Endothelial cell of umbilical vein (primary cell): ENCODE measurements at regions of chr6 and their contacts with region 1.

Region 1: DNA sequence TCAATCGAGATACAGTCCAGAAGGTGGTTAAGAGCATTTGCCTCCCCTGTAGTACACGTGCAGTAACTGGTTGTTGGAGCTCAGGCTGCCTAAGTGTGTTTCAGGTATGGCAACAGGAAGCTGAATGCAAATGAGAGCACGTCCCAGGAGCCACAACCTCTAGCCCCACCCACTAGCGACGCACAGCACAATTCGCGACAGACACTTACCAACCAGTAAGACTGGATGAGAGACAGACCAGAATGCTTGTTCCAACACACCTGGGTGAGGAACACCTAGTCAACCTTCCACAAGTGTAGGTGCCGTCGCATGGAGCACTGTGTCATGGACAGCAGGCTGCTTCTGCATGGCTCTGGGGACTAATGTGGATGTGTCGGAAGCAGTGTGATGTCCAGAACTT is 7.2 kb upstream of the SERPINB1 start:
- DNase-seq: no peak
- H3K4me3 ChIP-seq: no peak overlapping the region
- H3K27ac ChIP-seq: no peak overlapping the region
- H3K4me1 ChIP-seq: peaks cover 31% of the 10 kb centered on the region
- H3K27me3 ChIP-seq: no peaks in the 10 kb centered on the region
- CTCF ChIP-seq: no peak
- POLR2A ChIP-seq: no peak

Region 2: DNA sequence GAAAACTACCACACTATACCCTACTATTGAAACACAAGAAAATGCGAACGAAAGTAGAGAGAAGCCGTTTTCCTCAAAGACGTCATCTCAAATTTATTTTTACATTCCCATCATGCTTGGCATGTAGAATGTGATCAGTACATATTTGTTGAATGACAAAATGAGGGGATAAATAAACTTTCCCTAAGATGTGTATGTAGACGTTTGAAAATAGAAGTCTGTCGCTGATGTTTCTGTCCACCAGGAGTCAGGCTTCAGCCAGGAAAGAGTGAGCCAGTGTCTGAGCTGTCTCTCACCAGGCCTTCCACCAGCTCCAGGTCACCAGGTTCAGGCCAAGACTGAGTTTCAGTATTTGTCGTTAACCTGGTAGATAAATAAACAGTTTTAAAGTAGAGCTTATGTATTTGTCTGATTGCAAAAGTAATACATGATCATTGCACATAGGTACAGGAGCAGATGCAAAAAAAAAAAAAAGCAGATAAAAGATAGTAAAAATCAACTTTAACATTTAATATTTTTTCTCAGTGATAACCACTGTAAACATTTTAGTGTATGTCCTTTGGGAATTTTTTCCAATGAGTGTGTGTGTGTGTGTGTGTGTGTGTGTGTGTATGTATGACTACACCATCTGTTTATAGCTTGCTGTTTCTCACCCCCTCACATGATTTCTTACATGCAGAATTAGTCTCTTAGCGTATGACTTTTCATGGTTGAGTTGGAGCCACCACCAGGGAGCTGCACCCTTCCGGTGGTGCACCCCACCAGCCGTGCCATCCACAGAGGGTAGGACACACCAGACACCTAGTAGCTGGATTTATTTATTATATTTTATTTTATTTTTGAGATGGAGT is 57.5 kb before region 1 on chr6:
- CTCF ChIA-PET with region 1: interaction called, 262 read pairs
- POLR2A ChIA-PET with region 1: interaction called, 3 read pairs
- dilution Hi-C with region 1: no loop called
- intact Hi-C with region 1: loop called (anchors 1 kb)
- DNase-seq: peak; percentile 92
- H3K4me3 ChIP-seq: no peak overlapping the region
- H3K27ac ChIP-seq: peak overlapping the region; percentile 25
- H3K4me1 ChIP-seq: peaks cover 5% of the 10 kb centered on the region
- H3K27me3 ChIP-seq: no peaks in the 10 kb centered on the region
- CTCF ChIP-seq: peak; percentile 71 to 79
- POLR2A ChIP-seq: no peak

Region 3: DNA sequence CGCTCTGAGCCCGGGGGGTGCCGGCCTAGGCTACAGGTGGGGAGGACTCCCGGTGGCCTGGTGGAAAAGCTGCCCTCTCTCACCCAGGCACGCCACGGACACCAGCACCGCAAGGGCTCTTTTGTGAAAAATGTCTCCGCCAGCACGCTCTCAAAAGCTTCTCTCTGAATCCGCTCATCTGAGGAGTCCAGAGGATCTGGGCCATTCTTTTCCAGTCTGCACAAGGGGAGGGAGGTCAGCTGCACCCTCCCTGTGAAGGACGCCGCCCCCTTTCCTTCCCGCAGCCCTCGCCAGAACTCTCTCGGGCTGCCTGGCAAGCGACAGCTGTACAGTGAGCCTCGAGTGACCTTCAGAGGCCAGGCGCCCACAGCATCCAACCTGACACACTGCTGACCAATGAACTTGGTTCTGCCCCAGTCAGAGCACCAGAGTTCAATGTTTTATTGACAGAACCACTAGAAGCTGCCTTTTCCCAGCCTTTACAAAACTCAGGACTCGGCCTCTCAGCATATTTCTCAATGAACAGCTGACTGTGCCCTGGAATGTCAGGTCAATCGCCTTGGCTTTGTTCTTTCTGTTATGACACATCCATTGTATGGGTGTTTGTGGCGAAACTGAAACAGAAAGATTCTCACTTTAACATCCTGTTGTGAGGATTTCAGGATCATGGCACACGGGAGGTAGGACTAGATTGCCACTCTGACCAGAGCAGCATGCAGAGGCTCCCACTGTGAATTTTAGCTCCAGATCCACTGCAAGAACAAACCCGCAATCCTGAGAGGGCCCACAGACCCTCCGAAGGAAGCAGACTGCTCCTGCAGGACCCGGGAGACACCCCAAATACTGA is 27.6 kb after region 1 on chr6:
- CTCF ChIA-PET with region 1: interaction called, 16 read pairs
- POLR2A ChIA-PET with region 1: interaction called, 5 read pairs
- dilution Hi-C with region 1: no loop called
- intact Hi-C with region 1: loop called (anchors 1 kb)
- DNase-seq: peak; percentile 98
- H3K4me3 ChIP-seq: peak overlapping the region in 2 of 3 experiments; percentile 28 to 53
- H3K27ac ChIP-seq: peak overlapping the region; percentile 91
- H3K4me1 ChIP-seq: peaks cover 29% of the 10 kb centered on the region
- H3K27me3 ChIP-seq: no peaks in the 10 kb centered on the region
- CTCF ChIP-seq: no peak
- POLR2A ChIP-seq: peak; percentile 55

Region 4: GRCh38 chr6:2911171-2911570 is 62.3 kb after region 1 on chr6:
- CTCF ChIA-PET with region 1: interaction called, 19 read pairs
- POLR2A ChIA-PET with region 1: no interaction called
- dilution Hi-C with region 1: no loop called
- intact Hi-C with region 1: loop called (anchors 1 kb)
- DNase-seq: no peak
- H3K4me3 ChIP-seq: no peak overlapping the region
- H3K27ac ChIP-seq: no peak overlapping the region
- H3K4me1 ChIP-seq: no peaks in the 10 kb centered on the region
- H3K27me3 ChIP-seq: no peaks in the 10 kb centered on the region
- CTCF ChIP-seq: no peak
- POLR2A ChIP-seq: no peak

Region 5: GRCh38 chr6:2940010-2940850 is 91.4 kb after region 1 on chr6:
- CTCF ChIA-PET with region 1: interaction called, 13 read pairs
- POLR2A ChIA-PET with region 1: no interaction called
- dilution Hi-C with region 1: no loop called
- intact Hi-C with region 1: no loop called
- DNase-seq: no peak
- H3K4me3 ChIP-seq: no peak overlapping the region
- H3K27ac ChIP-seq: no peak overlapping the region
- H3K4me1 ChIP-seq: peaks cover 20% of the 10 kb centered on the region
- H3K27me3 ChIP-seq: no peaks in the 10 kb centered on the region
- CTCF ChIP-seq: no peak
- POLR2A ChIP-seq: no peak